ENCODE measurements at regions of chr9 and their contacts with region 1.

Region 1: GRCh38 chr9:134407123-134407808 is 81.0 kb downstream of the RXRA start:
- DNase-seq: peak; percentile 52 to 77 (median 69)
- ATAC-seq: peak; percentile 79
- H3K4me3 ChIP-seq: peak overlapping the region; percentile 51
- H3K4me3 Mint-ChIP-seq: peak overlapping the region; percentile 69 to 87 (median 79)
- H3K27ac ChIP-seq: no peak overlapping the region
- H3K27ac Mint-ChIP-seq: peak overlapping the region in 3 of 9 donors; percentile 74 to 81 (median 75)
- H3K4me1 ChIP-seq: peaks cover 40 to 49% of the 10 kb centered on the region in 2 donors
- H3K4me1 Mint-ChIP-seq: peaks cover 30 to 46% (median 41%) of the 10 kb centered on the region in 7 donors
- H3K27me3 ChIP-seq: no peaks in the 10 kb centered on the region
- H3K27me3 Mint-ChIP-seq: peaks cover 0 to 10% (median 0%) of the 10 kb centered on the region in 5 donors

Region 2: DNA sequence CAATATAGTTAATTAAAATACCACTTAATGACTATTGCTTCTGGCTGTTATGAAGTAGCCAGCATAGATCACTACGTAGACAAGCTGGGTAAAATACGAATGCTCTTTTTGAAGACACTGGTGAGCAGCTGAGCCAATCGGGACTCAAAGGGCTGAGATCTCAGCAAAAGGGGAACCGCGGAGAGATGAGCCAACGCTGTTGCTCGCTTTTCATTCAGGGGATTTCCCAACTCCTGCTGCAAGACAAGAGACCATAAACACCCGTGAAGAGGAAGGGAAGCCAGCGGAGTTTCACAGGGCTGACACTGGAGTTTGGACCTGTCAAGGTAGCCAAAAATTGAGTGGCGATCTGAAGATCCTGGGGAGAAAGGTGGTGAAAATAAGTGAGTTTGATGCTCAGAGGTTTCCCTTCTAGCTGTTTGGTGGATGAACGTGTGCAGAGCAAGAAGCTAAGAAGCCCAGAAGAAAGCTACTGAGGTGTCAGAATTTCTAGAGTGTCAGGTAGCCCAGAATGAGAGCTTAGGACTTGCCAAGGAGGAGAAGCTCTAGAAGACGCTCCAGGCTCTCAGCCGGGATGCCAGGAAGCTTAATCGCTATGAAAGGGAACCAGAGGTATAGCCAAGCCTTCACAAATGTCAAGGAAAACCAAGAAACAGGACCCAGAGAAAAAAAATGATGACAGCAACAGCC is 163.3 kb before region 1 on chr9:
- CTCF ChIA-PET with region 1: no interaction called
- POLR2A ChIA-PET with region 1: no interaction called
- intact Hi-C with region 1: no loop called
- DNase-seq: peak in 7 of 9 donors; percentile 7 to 64 (median 46)
- ATAC-seq: peak; percentile 97
- H3K4me3 ChIP-seq: no peak overlapping the region
- H3K4me3 Mint-ChIP-seq: peak overlapping the region in 9 of 10 donors; percentile 27 to 74 (median 59)
- H3K27ac ChIP-seq: peak overlapping the region; percentile 38
- H3K27ac Mint-ChIP-seq: peak overlapping the region; percentile 3 to 90 (median 61)
- H3K4me1 ChIP-seq: peaks cover 0 to 13% of the 10 kb centered on the region in 2 donors
- H3K4me1 Mint-ChIP-seq: peaks cover 6 to 28% (median 19%) of the 10 kb centered on the region in 7 donors
- H3K27me3 ChIP-seq: no peaks in the 10 kb centered on the region
- H3K27me3 Mint-ChIP-seq: peaks cover 0 to 11% (median 0%) of the 10 kb centered on the region in 5 donors

Region 3: GRCh38 chr9:134391314-134392231 is 15.7 kb before region 1 on chr9:
- CTCF ChIA-PET with region 1: no interaction called
- POLR2A ChIA-PET with region 1: interaction called, 12 read pairs
- intact Hi-C with region 1: loop called (anchors 1 to 2 kb)
- DNase-seq: peak in 8 of 9 donors; percentile 43 to 85 (median 48)
- ATAC-seq: peak; percentile 72
- H3K4me3 ChIP-seq: peak overlapping the region; percentile 40
- H3K4me3 Mint-ChIP-seq: peak overlapping the region; percentile 61 to 80 (median 74)
- H3K27ac ChIP-seq: peak overlapping the region; percentile 79
- H3K27ac Mint-ChIP-seq: peak overlapping the region; percentile 75 to 96 (median 92)
- H3K4me1 ChIP-seq: peaks cover 50 to 51% of the 10 kb centered on the region in 2 donors
- H3K4me1 Mint-ChIP-seq: peaks cover 31 to 62% (median 48%) of the 10 kb centered on the region in 7 donors
- H3K27me3 ChIP-seq: no peaks in the 10 kb centered on the region
- H3K27me3 Mint-ChIP-seq: peaks cover 0 to 9% (median 0%) of the 10 kb centered on the region in 5 donors